ENCODE measurements at regions of chr11 and their contacts with region 1.

Region 1: DNA sequence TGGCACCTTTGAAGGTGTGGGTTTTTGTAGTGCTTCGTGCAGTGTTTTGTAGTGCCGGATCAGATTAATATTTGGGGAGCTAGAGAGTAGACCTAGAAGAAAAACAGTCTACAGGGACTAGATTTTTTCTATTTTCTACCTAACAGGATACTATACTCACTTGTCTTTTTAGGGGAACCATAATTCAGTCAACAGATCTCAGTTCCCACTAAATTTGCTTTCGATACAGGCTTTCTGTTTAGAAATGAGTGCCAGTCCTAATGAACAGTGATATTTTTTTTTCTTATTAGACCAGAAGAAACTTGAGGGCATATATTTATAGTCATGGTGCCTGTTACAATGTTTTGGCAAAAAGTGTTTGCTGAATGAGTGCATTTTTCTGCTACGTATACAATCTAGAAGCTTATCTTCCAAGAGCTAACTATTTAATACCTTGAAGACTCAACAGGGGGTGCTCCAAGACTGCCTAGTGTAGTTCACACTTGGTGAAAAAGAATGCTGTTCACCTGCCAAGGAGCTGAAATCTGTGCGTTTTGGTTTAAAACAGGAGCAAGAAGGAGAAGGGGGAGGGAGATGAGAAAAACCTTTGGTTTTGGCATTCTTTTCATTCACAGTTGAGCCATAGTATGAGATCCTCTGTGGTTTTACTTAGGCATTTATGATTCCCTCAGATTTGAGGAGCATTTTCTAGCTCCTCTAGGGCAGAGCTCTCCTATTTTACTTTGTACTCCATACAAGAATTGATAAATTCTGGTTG is 44.9 kb upstream of the VSTM5 start:
- DNase-seq: peak; percentile 82
- ATAC-seq: peak; percentile 98
- H3K4me3 ChIP-seq: no peak overlapping the region
- H3K27ac ChIP-seq: no peak overlapping the region
- H3K4me1 ChIP-seq: no peaks in the 10 kb centered on the region
- H3K27me3 ChIP-seq: peaks cover 10% of the 10 kb centered on the region
- CTCF ChIP-seq: peak; percentile 88
- POLR2A ChIP-seq: no peak
- RAD21 ChIP-seq: peak; percentile 95

Region 2: GRCh38 chr11:93662177-93662575 is 233.1 kb before region 1 on chr11:
- CTCF ChIA-PET with region 1: no interaction called
- POLR2A ChIA-PET with region 1: no interaction called
- dilution Hi-C with region 1: no loop called
- in situ Hi-C with region 1: no loop called
- intact Hi-C with region 1: no loop called
- DNase-seq: no peak
- ATAC-seq: no peak
- H3K4me3 ChIP-seq: peak overlapping the region; percentile 70
- H3K27ac ChIP-seq: peak overlapping the region; percentile 50
- H3K4me1 ChIP-seq: peaks cover 2% of the 10 kb centered on the region; the same call in 1 of the 2 replicates
- H3K27me3 ChIP-seq: peaks cover 3% of the 10 kb centered on the region; the same call in 1 of the 2 replicates
- CTCF ChIP-seq: no peak
- POLR2A ChIP-seq: no peak
- RAD21 ChIP-seq: no peak

Region 3: DNA sequence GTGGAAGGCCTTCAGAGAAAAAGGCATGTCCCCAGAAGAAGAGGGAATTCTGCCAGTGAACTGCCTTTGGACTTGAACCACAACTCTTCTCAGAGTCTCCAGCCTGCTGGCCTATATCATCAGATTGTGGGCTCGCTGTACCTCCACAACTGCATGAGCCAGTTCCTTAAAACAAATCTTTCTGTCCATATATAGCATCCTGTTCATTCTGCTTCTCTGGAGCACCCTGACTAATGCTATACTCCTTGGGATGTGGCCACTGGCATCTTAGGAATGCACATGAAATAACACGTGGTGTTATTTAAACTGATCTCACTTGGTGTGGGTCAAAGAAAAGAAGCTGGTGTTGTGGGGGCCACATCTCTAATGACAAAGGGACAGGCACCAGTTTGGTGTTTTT is 13.4 kb after region 1 on chr11:
- CTCF ChIA-PET with region 1: interaction called, 13 read pairs
- POLR2A ChIA-PET with region 1: interaction called, 7 read pairs
- dilution Hi-C with region 1: no loop called
- in situ Hi-C with region 1: no loop called
- intact Hi-C with region 1: no loop called
- DNase-seq: peak; percentile 91
- ATAC-seq: peak; percentile 97
- H3K4me3 ChIP-seq: no peak overlapping the region
- H3K27ac ChIP-seq: peak overlapping the region; percentile 80
- H3K4me1 ChIP-seq: peaks cover 9% of the 10 kb centered on the region
- H3K27me3 ChIP-seq: no peaks in the 10 kb centered on the region
- CTCF ChIP-seq: no peak
- POLR2A ChIP-seq: no peak
- RAD21 ChIP-seq: no peak

Region 4: GRCh38 chr11:94171693-94172440 is 276.6 kb after region 1 on chr11:
- CTCF ChIA-PET with region 1: interaction called, 5 read pairs
- POLR2A ChIA-PET with region 1: no interaction called
- dilution Hi-C with region 1: no loop called
- in situ Hi-C with region 1: no loop called
- intact Hi-C with region 1: loop called (anchors 2 kb)
- DNase-seq: peak; percentile 50
- ATAC-seq: peak; percentile 41; the same call in 1 of the 2 replicates
- H3K4me3 ChIP-seq: no peak overlapping the region
- H3K27ac ChIP-seq: no peak overlapping the region
- H3K4me1 ChIP-seq: peaks cover 9% of the 10 kb centered on the region
- H3K27me3 ChIP-seq: no peaks in the 10 kb centered on the region
- CTCF ChIP-seq: peak; percentile 80
- POLR2A ChIP-seq: no peak
- RAD21 ChIP-seq: peak; percentile 81

Region 5: DNA sequence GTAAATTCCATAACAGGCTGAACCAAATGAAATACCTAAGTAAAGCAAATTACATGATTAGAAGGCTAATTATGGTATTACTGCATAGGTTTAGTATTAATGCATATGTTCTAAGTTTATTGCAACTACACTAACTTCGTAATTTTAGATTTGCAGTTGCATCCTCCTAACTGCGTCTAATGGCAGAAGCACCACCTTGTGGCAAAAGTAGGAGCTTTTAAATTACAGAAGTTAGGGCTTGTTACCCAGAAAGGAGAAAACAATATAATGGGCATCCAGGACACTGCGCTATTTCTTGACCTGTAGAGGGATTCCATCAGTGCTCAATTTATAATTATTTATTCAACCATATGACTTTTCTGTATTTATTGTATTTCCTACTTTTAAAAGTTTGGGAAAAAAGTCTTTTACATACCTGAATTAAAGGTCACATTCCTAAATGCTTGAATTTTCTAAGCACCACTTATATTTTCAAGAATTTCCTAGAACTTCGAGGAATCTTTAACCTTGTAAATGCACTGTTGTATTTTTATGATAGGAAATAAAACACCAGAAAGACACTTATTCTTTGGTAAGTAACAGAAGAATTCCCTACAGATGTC is 522.2 kb after region 1 on chr11:
- CTCF ChIA-PET with region 1: interaction called, 15 read pairs
- POLR2A ChIA-PET with region 1: no interaction called
- dilution Hi-C with region 1: no loop called
- in situ Hi-C with region 1: no loop called
- intact Hi-C with region 1: loop called (anchors 1 kb)
- DNase-seq: peak; percentile 59
- ATAC-seq: peak; percentile 73
- H3K4me3 ChIP-seq: no peak overlapping the region
- H3K27ac ChIP-seq: no peak overlapping the region
- H3K4me1 ChIP-seq: no peaks in the 10 kb centered on the region
- H3K27me3 ChIP-seq: no peaks in the 10 kb centered on the region
- CTCF ChIP-seq: peak; percentile 70
- POLR2A ChIP-seq: no peak
- RAD21 ChIP-seq: peak; percentile 70

Region 6: GRCh38 chr11:94602430-94603372 is 707.4 kb after region 1 on chr11:
- CTCF ChIA-PET with region 1: interaction called, 3 read pairs
- POLR2A ChIA-PET with region 1: no interaction called
- dilution Hi-C with region 1: no loop called
- in situ Hi-C with region 1: no loop called
- intact Hi-C with region 1: loop called (anchors 10 kb)
- DNase-seq: peak; percentile 86
- ATAC-seq: peak; percentile 92
- H3K4me3 ChIP-seq: no peak overlapping the region
- H3K27ac ChIP-seq: peak overlapping the region; percentile 15; the same call in 1 of the 2 replicates
- H3K4me1 ChIP-seq: no peaks in the 10 kb centered on the region; the same call in 1 of the 2 replicates
- H3K27me3 ChIP-seq: no peaks in the 10 kb centered on the region
- CTCF ChIP-seq: peak; percentile 64
- POLR2A ChIP-seq: no peak
- RAD21 ChIP-seq: peak; percentile 55

Measured in IMR-90 (cell line).